ENCODE measurements at regions of chr19 and their contacts with region 1.

Region 1: GRCh38 chr19:19192078-19192882 is at the starts of genes BORCS8 and RFXANK:
- DNase-seq: peak; percentile 99
- ATAC-seq: peak; percentile 97
- total RNA-seq, gene BORCS8: 20.1 to 24.0 TPM
- total RNA-seq, gene RFXANK: 40.7 to 46.2 TPM

Region 2: DNA sequence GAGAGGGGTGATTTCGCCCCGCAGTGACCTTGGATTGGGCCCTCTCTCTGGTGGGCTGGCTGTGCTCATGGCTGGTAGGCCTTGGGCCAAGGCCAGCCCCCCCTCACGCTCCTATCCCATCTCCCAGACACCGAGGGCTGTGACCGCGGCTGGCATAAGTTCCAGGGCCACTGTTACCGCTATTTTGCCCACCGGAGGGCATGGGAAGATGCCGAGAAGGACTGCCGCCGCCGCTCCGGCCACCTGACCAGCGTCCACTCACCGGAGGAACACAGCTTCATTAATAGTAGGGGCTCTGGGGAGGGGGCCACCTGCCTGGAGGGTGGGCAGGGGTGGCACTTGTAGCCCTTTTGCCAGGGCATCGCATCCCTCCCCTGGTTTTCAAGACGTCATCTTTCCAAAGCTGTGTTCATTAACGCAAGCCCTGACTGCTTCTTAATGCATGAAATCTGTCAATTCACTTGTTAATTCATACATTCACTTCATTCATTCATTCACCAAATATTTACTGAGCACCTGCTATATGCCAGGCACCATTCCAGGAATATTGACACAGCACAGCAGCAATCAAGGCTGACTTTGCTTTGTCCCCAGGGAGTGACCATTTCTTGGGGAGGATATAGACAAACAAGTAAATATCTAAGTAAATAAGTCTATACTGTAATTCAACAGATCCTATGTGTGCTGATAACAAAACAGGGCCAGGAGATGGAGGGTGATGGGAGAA is 46.0 kb after region 1 on chr19:
- intact Hi-C with region 1: no loop called
- DNase-seq: no peak
- ATAC-seq: no peak

Region 3: GRCh38 chr19:19320362-19321142 is 128.3 kb after region 1 on chr19 and contains the starts of genes MAU2 and SUGP1:
- intact Hi-C with region 1: loop called in 1 of 2 experiments (anchors 10 kb)
- DNase-seq: peak; percentile 91
- ATAC-seq: peak; percentile 97 to 98
- total RNA-seq, gene MAU2: 26.2 to 35.5 TPM
- total RNA-seq, gene SUGP1: 33.5 to 40.5 TPM

Measured in left cardiac atrium (tissue), 4 donors.